CD8-positive, alpha-beta T cell (primary cell): ENCODE measurements at regions of chr7 and their contacts with region 1.

Region 1: GRCh38 chr7:4610768-4611467 is 71.2 kb upstream of the FOXK1 start:
- DNase-seq: peak; percentile 12 to 80 (median 59)
- ATAC-seq: peak; percentile 91
- H3K4me3 ChIP-seq: no peak overlapping the region
- H3K4me3 Mint-ChIP-seq: no peak overlapping the region
- H3K27ac ChIP-seq: no peak overlapping the region
- H3K27ac Mint-ChIP-seq: no peak overlapping the region
- H3K4me1 ChIP-seq: no peaks in the 10 kb centered on the region
- H3K4me1 Mint-ChIP-seq: peaks cover 8% of the 10 kb centered on the region
- H3K27me3 ChIP-seq: no peaks in the 10 kb centered on the region
- H3K27me3 Mint-ChIP-seq: peaks cover 6% of the 10 kb centered on the region
- CTCF ChIP-seq: peak; percentile 70

Region 2: GRCh38 chr7:4531236-4531635 is 79.7 kb before region 1 on chr7:
- CTCF ChIA-PET with region 1: no interaction called
- POLR2A ChIA-PET with region 1: no interaction called
- intact Hi-C with region 1: no loop called
- DNase-seq: no peak
- ATAC-seq: no peak
- H3K4me3 ChIP-seq: no peak overlapping the region
- H3K4me3 Mint-ChIP-seq: no peak overlapping the region
- H3K27ac ChIP-seq: no peak overlapping the region
- H3K27ac Mint-ChIP-seq: no peak overlapping the region
- H3K4me1 ChIP-seq: no peaks in the 10 kb centered on the region
- H3K4me1 Mint-ChIP-seq: no peaks in the 10 kb centered on the region
- H3K27me3 ChIP-seq: no peaks in the 10 kb centered on the region
- H3K27me3 Mint-ChIP-seq: peaks cover 9% of the 10 kb centered on the region
- CTCF ChIP-seq: no peak

Region 3: GRCh38 chr7:4883374-4884144 is 272.6 kb after region 1 on chr7 and contains the start of gene RADIL:
- CTCF ChIA-PET with region 1: no interaction called
- POLR2A ChIA-PET with region 1: no interaction called
- intact Hi-C with region 1: loop called in 1 of 2 experiments (anchors 2 kb)
- DNase-seq: peak; percentile 60 to 90 (median 81)
- ATAC-seq: peak; percentile 98
- H3K4me3 ChIP-seq: peak within 1 kb of the TSS in 1 of 2 experiments; percentile 11
- H3K4me3 Mint-ChIP-seq: peak within 1 kb of the TSS; percentile 75
- H3K27ac ChIP-seq: no peak within 1 kb of the TSS
- H3K27ac Mint-ChIP-seq: no peak within 1 kb of the TSS
- H3K4me1 ChIP-seq: peaks cover 7% of the 10 kb centered on the region
- H3K4me1 Mint-ChIP-seq: peaks cover 10% of the 10 kb centered on the region
- H3K27me3 ChIP-seq: peaks cover 6 to 12% of the 10 kb centered on the region in 2 experiments
- H3K27me3 Mint-ChIP-seq: peaks cover 33% of the 10 kb centered on the region
- CTCF ChIP-seq: peak; percentile 60
- total RNA-seq, gene RADIL: not detected

Region 4: DNA sequence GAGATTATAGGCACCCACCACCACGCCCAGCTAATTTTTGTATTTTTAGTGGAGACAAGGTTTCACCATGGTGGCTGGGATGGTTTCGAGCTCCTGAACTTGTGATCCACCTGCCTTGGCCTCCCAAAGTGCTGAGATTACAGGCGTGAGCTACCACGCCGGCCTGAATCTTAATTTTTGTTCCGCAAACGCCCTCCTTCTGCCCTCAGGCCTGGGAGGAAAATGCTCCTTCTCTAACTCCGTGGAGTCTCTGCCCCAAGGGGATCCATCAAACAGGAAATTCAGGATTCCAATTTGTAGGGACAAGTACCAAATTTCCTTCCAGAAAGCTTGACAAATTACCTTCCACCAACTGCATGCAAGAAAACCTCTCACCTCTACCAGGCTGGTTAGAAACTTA is 478.0 kb after region 1 on chr7:
- CTCF ChIA-PET with region 1: no interaction called
- POLR2A ChIA-PET with region 1: no interaction called
- intact Hi-C with region 1: loop called in 1 of 2 experiments (anchors 5 kb)
- DNase-seq: no peak
- ATAC-seq: no peak
- H3K4me3 ChIP-seq: no peak overlapping the region
- H3K4me3 Mint-ChIP-seq: no peak overlapping the region
- H3K27ac ChIP-seq: no peak overlapping the region
- H3K27ac Mint-ChIP-seq: no peak overlapping the region
- H3K4me1 ChIP-seq: peaks cover 3% of the 10 kb centered on the region
- H3K4me1 Mint-ChIP-seq: peaks cover 3% of the 10 kb centered on the region
- H3K27me3 ChIP-seq: peaks cover 0 to 2% of the 10 kb centered on the region in 2 experiments
- H3K27me3 Mint-ChIP-seq: no peaks in the 10 kb centered on the region
- CTCF ChIP-seq: no peak